ENCODE measurements at regions of chr12 and their contacts with region 1.

Region 1: GRCh38 chr12:3959799-3960560 is 86.8 kb upstream of the PARP11 start:
- DNase-seq: no peak

Region 2: DNA sequence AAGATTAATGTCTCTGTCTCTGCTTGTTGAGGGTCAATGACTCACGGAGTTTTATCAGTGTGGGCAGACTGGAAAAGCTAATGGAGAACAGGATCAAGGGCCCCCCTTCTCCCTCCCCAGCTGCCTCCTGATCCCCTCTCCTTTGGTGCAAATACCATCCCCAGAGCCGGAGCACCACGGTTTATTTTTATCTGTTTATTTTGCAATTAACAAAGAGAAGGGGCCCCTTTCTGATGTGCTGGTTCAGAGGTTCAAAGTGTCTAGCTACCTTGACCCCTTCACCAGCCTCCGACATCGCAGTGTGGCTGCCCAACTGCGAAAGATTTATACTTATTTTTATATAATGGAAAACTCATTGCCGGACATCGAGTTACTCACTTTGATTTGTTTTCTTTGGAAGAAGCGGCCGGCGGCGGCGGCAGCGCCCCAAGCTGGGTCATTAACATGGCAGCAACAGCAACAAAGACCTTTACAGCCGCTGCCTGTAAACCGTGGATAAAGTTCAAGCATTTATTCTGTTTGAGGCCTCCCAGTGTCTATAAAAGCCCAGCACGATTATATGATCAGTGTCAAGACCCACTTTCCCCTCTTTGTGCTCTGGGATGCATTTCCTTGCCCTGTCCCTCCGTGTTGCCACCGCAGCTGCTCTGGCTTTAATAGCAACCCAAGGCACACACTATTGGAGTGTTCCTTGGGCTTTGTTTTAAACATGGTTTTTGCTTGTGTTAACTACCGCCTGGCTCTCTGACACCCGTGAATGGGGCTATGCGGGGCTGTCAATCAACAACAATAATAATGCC is 39.4 kb before region 1 on chr12:
- intact Hi-C with region 1: loop called in 1 of 2 experiments (anchors 2 kb)
- DNase-seq: no peak

Region 3: GRCh38 chr12:3973978-3974644 is 14.1 kb after region 1 on chr12:
- intact Hi-C with region 1: no loop called
- DNase-seq: no peak